Right ventricle myocardium superior (tissue), 1 donor: ENCODE measurements at regions of chr6 and their contacts with region 1.

Region 1: GRCh38 chr6:152642989-152643388 is 5.8 kb upstream of the SYNE1 start:
- DNase-seq: peak; percentile 71
- ATAC-seq: peak; percentile 80

Region 2: GRCh38 chr6:152552616-152553209 is 90.3 kb before region 1 on chr6:
- intact Hi-C with region 1: loop called (anchors 2 kb)
- DNase-seq: peak; percentile 73
- ATAC-seq: peak; percentile 89

Region 3: GRCh38 chr6:152575621-152576150 is 67.3 kb before region 1 on chr6:
- intact Hi-C with region 1: no loop called
- DNase-seq: no peak
- ATAC-seq: peak; percentile 72

Region 4: GRCh38 chr6:152605342-152605741 is 37.6 kb before region 1 on chr6:
- intact Hi-C with region 1: no loop called
- DNase-seq: no peak
- ATAC-seq: no peak